ENCODE measurements at regions of chr9 and their contacts with region 1.

Region 1: DNA sequence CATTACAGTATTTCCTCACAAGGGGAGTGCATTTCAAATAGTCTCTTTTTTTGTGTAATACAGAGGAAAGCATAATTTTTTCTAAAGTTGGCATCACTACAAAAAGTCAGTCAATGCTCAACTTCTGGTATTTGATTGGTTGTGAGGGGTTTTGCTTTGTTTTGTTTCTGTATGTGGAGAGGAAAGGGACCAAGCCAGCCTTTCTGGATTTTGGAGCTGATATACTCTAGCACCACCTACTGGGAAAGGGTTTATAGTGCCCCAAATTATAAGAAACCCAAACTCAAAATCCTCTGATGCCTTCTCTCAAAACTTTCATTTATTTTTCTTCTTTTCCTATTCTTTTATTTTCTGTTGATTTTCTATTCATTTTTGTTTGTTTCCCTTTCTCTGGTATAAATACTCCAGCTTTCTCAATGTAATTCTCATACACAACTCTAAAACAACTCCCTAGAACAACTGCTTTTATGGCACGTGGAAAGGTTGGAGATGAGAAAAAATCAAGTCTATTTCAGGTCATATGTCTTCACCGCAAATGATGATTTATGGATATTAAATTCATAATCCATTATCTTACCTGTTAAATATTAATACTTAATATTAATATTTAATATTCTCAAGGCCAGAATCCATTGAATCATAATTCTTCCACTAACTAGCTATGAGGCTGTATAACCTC is 69.5 kb upstream of the ANXA1 start:
- DNase-seq: no peak
- ATAC-seq: peak; percentile 53 to 59

Region 2: GRCh38 chr9:72554221-72554641 is 527.9 kb before region 1 on chr9:
- intact Hi-C with region 1: no loop called
- DNase-seq: no peak
- ATAC-seq: peak; percentile 47 to 71

Region 3: GRCh38 chr9:72856972-72857623 is 225.0 kb before region 1 on chr9:
- intact Hi-C with region 1: loop called in 1 of 2 experiments (anchors 2 kb)
- DNase-seq: no peak
- ATAC-seq: peak; percentile 75 to 77

Region 4: GRCh38 chr9:72871685-72872084 is 210.4 kb before region 1 on chr9:
- intact Hi-C with region 1: loop called in 1 of 2 experiments (anchors 5 kb)
- DNase-seq: no peak
- ATAC-seq: no peak

Region 5: DNA sequence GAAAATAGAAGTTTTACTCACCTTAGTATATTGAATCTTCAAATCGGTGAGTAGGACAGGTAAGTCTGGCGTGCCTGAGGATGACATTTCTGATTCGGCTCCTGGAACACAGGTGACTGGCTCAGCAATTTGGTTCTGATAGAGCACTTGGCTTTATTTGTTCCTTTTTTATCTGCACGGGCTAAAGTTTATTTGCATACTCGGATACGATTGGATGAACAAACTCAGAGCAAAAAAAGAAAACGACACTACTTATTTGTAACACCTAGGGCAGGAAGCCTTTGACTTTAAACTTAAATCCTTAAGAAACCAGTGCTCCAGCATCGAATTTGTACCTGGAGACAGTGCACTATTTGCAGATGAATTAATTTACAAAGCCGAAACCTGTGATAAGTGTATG is 129.2 kb before region 1 on chr9 and contains the start of gene ALDH1A1:
- intact Hi-C with region 1: no loop called
- DNase-seq: no peak
- ATAC-seq: peak; percentile 56 to 65
- total RNA-seq, gene ALDH1A1: 24.3 to 45.0 TPM

Measured in left cardiac atrium (tissue), 4 donors.